Ovary (tissue), 10 donors: ENCODE measurements at regions of chr1 and their contacts with region 1.

Region 1: GRCh38 chr1:204032632-204033235 is 40.2 kb upstream of the SOX13 start:
- DNase-seq: no peak
- H3K4me3 ChIP-seq: no peak overlapping the region
- H3K27ac ChIP-seq: no peak overlapping the region
- H3K4me1 ChIP-seq: no peaks in the 10 kb centered on the region
- H3K27me3 ChIP-seq: no peaks in the 10 kb centered on the region
- CTCF ChIP-seq: no peak
- EP300 ChIP-seq: no peak
- POLR2A ChIP-seq: no peak

Region 2: GRCh38 chr1:203526572-203526971 is 506.2 kb before region 1 on chr1:
- intact Hi-C with region 1: no loop called
- DNase-seq: no peak
- H3K4me3 ChIP-seq: no peak overlapping the region
- H3K27ac ChIP-seq: no peak overlapping the region
- H3K4me1 ChIP-seq: peaks cover 9% of the 10 kb centered on the region
- H3K27me3 ChIP-seq: no peaks in the 10 kb centered on the region
- CTCF ChIP-seq: no peak
- EP300 ChIP-seq: no peak
- POLR2A ChIP-seq: no peak

Region 3: GRCh38 chr1:204098683-204099082 is 65.9 kb after region 1 on chr1:
- intact Hi-C with region 1: loop called in 1 of 4 experiments (anchors 2 kb)
- DNase-seq: no peak
- H3K4me3 ChIP-seq: no peak overlapping the region
- H3K27ac ChIP-seq: no peak overlapping the region
- H3K4me1 ChIP-seq: peaks cover 5% of the 10 kb centered on the region
- H3K27me3 ChIP-seq: no peaks in the 10 kb centered on the region
- CTCF ChIP-seq: no peak
- EP300 ChIP-seq: no peak
- POLR2A ChIP-seq: no peak

Region 4: DNA sequence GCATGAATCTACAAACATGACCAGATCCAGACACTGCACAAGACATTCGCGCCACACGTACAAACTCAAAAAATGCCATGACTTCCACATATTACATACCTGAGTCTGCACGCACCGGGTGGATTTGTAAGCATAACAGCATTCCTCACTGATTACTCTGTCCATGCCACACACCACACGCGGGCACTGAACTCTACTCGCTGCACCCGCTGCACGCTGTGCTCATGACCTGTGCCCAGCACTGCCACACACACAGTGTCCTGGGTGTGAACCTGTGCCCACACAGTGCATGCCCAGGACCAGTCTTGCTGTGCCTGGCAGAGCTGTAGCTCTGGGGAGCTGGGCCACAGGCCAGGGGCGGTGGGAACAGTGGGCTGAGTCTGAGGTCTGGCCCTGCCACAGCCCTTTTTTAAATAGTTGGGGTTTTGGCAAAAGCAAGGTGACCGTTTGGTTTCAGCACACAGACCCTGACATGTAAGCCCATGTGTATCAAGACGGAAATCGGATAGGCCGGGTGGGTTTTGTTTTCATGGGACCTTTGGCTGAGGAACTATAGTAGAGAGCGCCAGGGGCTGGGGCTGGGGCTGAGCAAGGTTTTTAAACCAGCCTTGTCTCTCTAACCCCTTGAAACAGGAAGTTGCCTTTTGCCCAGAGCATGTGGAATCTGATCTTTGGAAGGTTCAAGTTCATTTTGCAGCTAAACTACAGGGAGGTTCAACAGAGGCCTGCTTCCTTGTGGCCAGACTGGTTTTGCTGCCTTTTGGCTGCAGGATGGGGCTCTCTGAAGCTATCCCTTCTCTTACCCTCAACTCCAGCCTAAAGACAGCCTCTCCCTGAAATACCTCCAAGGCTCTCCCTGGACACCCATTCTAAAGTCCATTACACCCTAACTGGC is 193.4 kb after region 1 on chr1:
- intact Hi-C with region 1: no loop called
- DNase-seq: no peak
- H3K4me3 ChIP-seq: no peak overlapping the region
- H3K27ac ChIP-seq: no peak overlapping the region
- H3K4me1 ChIP-seq: no peaks in the 10 kb centered on the region
- H3K27me3 ChIP-seq: no peaks in the 10 kb centered on the region
- CTCF ChIP-seq: no peak
- EP300 ChIP-seq: no peak
- POLR2A ChIP-seq: no peak